GM12878 (cell line): ENCODE measurements at regions of chr15 and their contacts with region 1.

Region 1: GRCh38 chr15:68875377-68876116 is 54.8 kb upstream of the SPESP1 start:
- DNase-seq: peak; percentile 33
- ATAC-seq: peak; percentile 92
- H3K4me3 ChIP-seq: no peak overlapping the region
- H3K27ac ChIP-seq: no peak overlapping the region
- H3K4me1 ChIP-seq: no peaks in the 10 kb centered on the region
- H3K27me3 ChIP-seq: no peaks in the 10 kb centered on the region
- CTCF ChIP-seq: peak; percentile 81 to 96 (median 82); a peak in 4 of 6 replicates
- EP300 ChIP-seq: no peak
- POLR2A ChIP-seq: no peak
- RAD21 ChIP-seq: peak; percentile 96

Region 2: DNA sequence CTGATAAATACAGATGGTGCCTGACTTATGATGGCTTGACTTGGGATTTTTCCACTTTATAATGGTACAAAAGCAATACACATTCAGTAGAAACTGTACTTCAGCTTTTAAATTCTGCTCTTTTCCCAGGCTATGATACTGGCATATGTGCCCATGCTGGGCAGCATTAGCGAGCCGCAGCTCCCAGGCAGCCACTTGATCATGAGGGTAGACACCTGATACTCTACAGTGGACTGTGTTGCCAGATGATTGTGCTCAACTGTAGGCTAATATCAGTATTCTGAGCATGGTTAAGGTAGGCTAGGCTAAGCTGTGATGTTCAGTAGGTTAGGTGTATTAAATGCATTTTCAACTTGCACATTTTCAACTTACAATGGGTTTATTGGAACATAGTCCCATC is 615.7 kb before region 1 on chr15:
- CTCF ChIA-PET with region 1: no interaction called
- POLR2A ChIA-PET with region 1: no interaction called
- RAD21 ChIA-PET with region 1: no interaction called
- SMC1A ChIA-PET with region 1: no interaction called
- in situ Hi-C with region 1: no loop called
- intact Hi-C with region 1: no loop called
- DNase-seq: no peak
- ATAC-seq: no peak
- H3K4me3 ChIP-seq: no peak overlapping the region
- H3K27ac ChIP-seq: no peak overlapping the region
- H3K4me1 ChIP-seq: no peaks in the 10 kb centered on the region
- H3K27me3 ChIP-seq: no peaks in the 10 kb centered on the region; a peak in 2 of 4 replicates
- CTCF ChIP-seq: no peak
- EP300 ChIP-seq: no peak
- POLR2A ChIP-seq: no peak
- RAD21 ChIP-seq: no peak

Region 3: DNA sequence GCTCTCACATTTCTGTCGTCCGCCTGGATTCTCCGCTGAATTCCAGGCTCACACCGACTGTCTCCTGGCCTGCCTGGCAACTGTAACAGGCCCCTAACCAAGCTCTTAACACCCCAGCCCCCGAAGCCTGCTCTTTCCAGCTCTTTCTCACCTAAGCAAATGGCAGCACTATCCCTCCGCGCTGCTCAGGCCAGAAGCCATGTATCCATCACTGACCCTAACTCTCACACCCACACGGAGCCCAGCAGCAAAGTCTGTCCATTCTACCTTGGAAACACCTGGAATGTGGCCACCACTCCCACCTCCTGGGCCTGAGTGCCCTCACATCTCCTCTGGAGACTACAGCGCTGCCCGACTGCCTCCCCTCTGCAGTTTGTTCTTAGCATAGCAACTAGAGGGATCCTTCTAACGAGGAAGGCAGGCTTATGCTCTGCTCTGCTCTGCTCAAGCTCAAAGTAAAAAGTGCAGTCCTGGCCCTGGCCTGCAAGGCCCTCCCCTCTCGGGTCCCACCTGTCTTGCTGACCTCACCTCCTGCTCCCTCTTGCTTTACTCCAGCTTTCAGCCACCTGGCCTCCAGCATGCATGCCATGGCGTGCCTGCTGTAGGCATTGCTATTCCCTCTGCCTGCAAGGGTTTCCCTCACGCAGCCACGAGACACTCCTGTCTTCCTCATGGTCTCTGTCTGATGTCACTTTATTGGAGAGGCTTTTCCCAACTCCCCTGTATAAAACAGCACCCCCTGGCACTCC is 570.8 kb before region 1 on chr15:
- CTCF ChIA-PET with region 1: interaction called, 7 read pairs
- POLR2A ChIA-PET with region 1: no interaction called
- RAD21 ChIA-PET with region 1: no interaction called
- SMC1A ChIA-PET with region 1: interaction called, 3 read pairs
- in situ Hi-C with region 1: no loop called
- intact Hi-C with region 1: loop called (anchors 5 kb)
- DNase-seq: no peak
- ATAC-seq: no peak
- H3K4me3 ChIP-seq: no peak overlapping the region
- H3K27ac ChIP-seq: no peak overlapping the region
- H3K4me1 ChIP-seq: peaks cover 11% of the 10 kb centered on the region
- H3K27me3 ChIP-seq: no peaks in the 10 kb centered on the region
- CTCF ChIP-seq: no peak
- EP300 ChIP-seq: no peak
- POLR2A ChIP-seq: no peak
- RAD21 ChIP-seq: no peak

Region 4: DNA sequence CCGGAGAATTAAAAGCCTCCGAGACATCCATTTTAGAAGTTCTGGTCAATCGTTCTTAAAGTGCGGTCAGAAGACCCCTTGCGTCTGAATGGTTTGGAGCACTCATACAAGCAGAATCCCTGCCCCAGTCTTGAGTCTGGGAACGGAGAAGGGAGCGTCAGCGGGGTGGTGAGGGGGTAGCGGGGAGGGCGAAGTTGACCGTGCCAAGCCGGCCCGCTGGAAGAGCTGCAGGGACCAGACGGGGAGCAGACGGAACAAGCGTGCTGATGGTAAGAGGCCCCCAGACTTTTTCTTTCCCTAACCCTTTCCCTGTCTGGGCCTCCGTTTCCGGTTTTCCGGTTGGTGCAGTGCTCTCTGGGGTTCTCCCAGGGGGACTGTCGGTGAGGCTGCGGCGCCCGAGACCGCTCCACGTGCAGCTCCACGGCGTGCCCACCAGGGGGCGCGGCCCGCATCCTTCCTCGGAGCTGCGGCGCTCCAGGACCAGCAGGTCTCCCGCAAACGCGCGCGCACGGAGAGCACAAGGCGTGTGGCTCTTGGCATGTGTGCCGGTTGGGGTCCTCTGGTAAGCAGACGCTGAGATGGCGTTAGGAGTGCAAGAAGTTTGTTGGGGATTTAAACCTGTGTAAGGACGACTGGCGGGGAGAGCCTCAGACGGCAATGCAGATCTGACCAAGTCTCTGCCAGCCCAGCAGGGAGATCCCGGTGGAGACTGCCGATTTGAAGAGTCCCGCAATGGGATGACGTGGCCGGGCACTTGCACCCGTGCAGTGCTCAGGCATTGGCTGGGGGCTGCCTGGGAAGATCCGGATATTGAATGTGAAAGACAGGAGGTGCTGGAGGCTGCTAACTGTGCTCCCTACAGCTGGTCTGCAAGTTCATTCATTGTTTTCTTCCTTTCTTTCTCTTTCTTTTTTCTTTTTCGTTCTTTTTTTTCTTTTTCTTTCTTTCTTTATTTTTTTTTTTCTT is 315.9 kb before region 1 on chr15:
- CTCF ChIA-PET with region 1: interaction called, 34 read pairs
- POLR2A ChIA-PET with region 1: no interaction called
- RAD21 ChIA-PET with region 1: interaction called, 9 read pairs
- SMC1A ChIA-PET with region 1: interaction called, 13 read pairs
- in situ Hi-C with region 1: loop called (anchors 5 kb)
- intact Hi-C with region 1: loop called (anchors 2 kb)
- DNase-seq: no peak
- ATAC-seq: peak; percentile 96
- H3K4me3 ChIP-seq: no peak overlapping the region
- H3K27ac ChIP-seq: no peak overlapping the region
- H3K4me1 ChIP-seq: no peaks in the 10 kb centered on the region
- H3K27me3 ChIP-seq: peaks cover 0 to 3% of the 10 kb centered on the region in 2 experiments; a peak in 2 of 4 replicates
- CTCF ChIP-seq: peak; percentile 85 to 93 (median 89)
- EP300 ChIP-seq: no peak
- POLR2A ChIP-seq: no peak
- RAD21 ChIP-seq: peak; percentile 52

Region 5: DNA sequence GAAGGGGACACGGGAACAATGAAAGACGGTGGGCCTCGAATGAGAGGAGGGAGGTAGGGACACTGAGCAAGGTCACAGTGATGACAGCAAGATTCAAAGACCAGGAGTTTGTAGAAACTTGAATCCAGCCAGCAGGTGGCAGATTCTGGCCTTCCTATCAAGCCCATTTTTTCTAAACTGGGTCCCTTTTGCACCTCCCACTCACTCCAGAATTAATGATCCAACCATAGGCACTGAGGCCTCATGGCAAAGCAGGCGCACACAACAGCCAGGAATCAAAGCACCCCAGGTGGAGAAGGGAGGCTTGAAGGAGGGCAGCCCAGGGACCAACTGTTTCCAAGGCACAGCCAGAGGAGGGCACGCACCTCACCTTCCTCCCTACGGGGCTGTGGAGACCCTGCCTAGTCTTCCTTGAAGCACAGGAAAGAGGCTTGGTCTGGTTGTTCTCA is 145.1 kb before region 1 on chr15:
- CTCF ChIA-PET with region 1: interaction called, 17 read pairs
- POLR2A ChIA-PET with region 1: no interaction called
- RAD21 ChIA-PET with region 1: interaction called, 15 read pairs
- SMC1A ChIA-PET with region 1: interaction called, 14 read pairs
- in situ Hi-C with region 1: loop called (anchors 5 kb)
- intact Hi-C with region 1: loop called (anchors 1 kb)
- DNase-seq: no peak
- ATAC-seq: peak; percentile 64
- H3K4me3 ChIP-seq: no peak overlapping the region
- H3K27ac ChIP-seq: no peak overlapping the region
- H3K4me1 ChIP-seq: no peaks in the 10 kb centered on the region
- H3K27me3 ChIP-seq: peaks cover 0 to 3% of the 10 kb centered on the region in 2 experiments; a peak in 3 of 4 replicates
- CTCF ChIP-seq: peak; percentile 49 to 60 (median 49)
- EP300 ChIP-seq: no peak
- POLR2A ChIP-seq: no peak
- RAD21 ChIP-seq: peak; percentile 65

Region 6: GRCh38 chr15:68783226-68784058 is 92.1 kb before region 1 on chr15:
- CTCF ChIA-PET with region 1: interaction called, 48 read pairs
- POLR2A ChIA-PET with region 1: no interaction called
- RAD21 ChIA-PET with region 1: interaction called, 32 read pairs
- SMC1A ChIA-PET with region 1: interaction called, 23 read pairs
- in situ Hi-C with region 1: loop called (anchors 5 kb)
- intact Hi-C with region 1: loop called (anchors 1 kb)
- DNase-seq: no peak
- ATAC-seq: peak; percentile 99
- H3K4me3 ChIP-seq: no peak overlapping the region
- H3K27ac ChIP-seq: no peak overlapping the region
- H3K4me1 ChIP-seq: peaks cover 9% of the 10 kb centered on the region
- H3K27me3 ChIP-seq: no peaks in the 10 kb centered on the region
- CTCF ChIP-seq: peak; percentile 69 to 83 (median 74)
- EP300 ChIP-seq: no peak
- POLR2A ChIP-seq: peak; percentile 30; the same call in 1 of the 2 replicates
- RAD21 ChIP-seq: peak; percentile 79

Region 7: DNA sequence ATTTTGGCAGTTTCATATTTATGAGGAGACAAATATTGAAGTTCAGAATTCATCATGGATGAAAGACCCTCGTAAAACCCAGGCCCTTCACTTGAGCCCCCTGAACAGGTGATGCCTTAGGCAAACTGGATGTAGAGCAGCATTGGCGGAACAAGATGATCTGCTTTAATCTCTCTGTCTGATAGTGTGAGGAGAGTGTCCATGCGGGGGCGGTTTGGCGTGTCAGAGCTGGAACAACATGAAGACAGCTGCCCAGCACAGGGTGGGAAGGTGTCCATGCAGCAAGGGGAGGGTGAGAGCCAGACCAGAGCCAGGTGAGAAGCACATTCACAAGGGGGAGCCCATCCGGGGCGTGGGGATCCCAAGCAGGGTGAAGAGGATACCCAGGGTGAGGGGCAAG is 23.1 kb before region 1 on chr15:
- CTCF ChIA-PET with region 1: interaction called, 12 read pairs
- POLR2A ChIA-PET with region 1: no interaction called
- RAD21 ChIA-PET with region 1: interaction called, 4 read pairs
- SMC1A ChIA-PET with region 1: no interaction called
- in situ Hi-C with region 1: no loop called
- intact Hi-C with region 1: no loop called
- DNase-seq: no peak
- ATAC-seq: no peak
- H3K4me3 ChIP-seq: no peak overlapping the region
- H3K27ac ChIP-seq: no peak overlapping the region
- H3K4me1 ChIP-seq: no peaks in the 10 kb centered on the region
- H3K27me3 ChIP-seq: peaks cover 0 to 2% of the 10 kb centered on the region in 2 experiments; a peak in 3 of 4 replicates
- CTCF ChIP-seq: no peak
- EP300 ChIP-seq: no peak
- POLR2A ChIP-seq: no peak
- RAD21 ChIP-seq: no peak

Region 8: GRCh38 chr15:69172828-69173227 is 297.3 kb after region 1 on chr15:
- CTCF ChIA-PET with region 1: no interaction called
- POLR2A ChIA-PET with region 1: no interaction called
- RAD21 ChIA-PET with region 1: no interaction called
- SMC1A ChIA-PET with region 1: no interaction called
- in situ Hi-C with region 1: no loop called
- intact Hi-C with region 1: no loop called
- DNase-seq: no peak
- ATAC-seq: no peak
- H3K4me3 ChIP-seq: no peak overlapping the region
- H3K27ac ChIP-seq: no peak overlapping the region
- H3K4me1 ChIP-seq: no peaks in the 10 kb centered on the region
- H3K27me3 ChIP-seq: no peaks in the 10 kb centered on the region
- CTCF ChIP-seq: no peak
- EP300 ChIP-seq: no peak
- POLR2A ChIP-seq: no peak
- RAD21 ChIP-seq: no peak